Heart right ventricle (tissue), 16 donors: ENCODE measurements at regions of chr4 and their contacts with region 1.

Region 1: DNA sequence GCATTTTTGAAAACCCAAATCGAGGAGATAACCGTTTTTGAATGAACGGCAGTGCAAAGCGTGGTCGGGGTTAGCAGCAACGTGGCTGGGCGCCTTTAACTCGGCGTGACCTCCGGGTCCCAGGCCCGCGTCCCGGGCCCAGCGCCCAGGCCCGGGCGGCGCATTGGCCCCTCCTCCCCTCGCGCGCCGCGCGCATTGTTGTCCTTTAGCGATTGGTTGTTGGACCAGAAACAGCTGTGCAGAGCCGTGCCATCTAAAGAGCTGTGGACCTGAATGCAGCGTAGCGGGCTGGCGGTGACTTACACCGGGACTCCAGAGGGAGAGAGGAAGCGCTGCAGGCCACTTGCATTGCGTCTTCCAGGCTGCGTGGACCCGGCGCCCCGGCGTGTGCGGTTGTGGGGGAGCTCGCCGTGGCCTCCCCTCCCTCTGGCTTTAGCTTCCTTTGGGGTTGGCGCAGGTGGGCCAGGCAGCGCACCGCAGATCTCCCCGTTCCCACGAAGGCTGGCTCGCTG is at the start of gene STOX2:
- DNase-seq: peak; percentile 88
- ATAC-seq: peak; percentile 92 to 97 (median 95)
- H3K4me3 ChIP-seq: peak within 1 kb of the TSS; percentile 51 to 93 (median 76)
- H3K27ac ChIP-seq: peak within 1 kb of the TSS; percentile 77 to 92 (median 89)
- H3K4me1 ChIP-seq: peaks cover 0 to 50% (median 25%) of the 10 kb centered on the region in 9 donors
- H3K27me3 ChIP-seq: peaks cover 0 to 44% (median 0%) of the 10 kb centered on the region in 7 donors
- CTCF ChIP-seq: no peak
- total RNA-seq, gene STOX2: 8.3 to 25.5 (median 13.9) TPM

Region 2: GRCh38 chr4:183430317-183430993 is 474.7 kb before region 1 on chr4:
- intact Hi-C with region 1: no loop called
- DNase-seq: peak in 1 of 2 donors; percentile 10
- ATAC-seq: peak in 6 of 8 donors; percentile 38 to 79 (median 62)
- H3K4me3 ChIP-seq: no peak overlapping the region
- H3K27ac ChIP-seq: peak overlapping the region in 3 of 10 donors; percentile 36 to 67 (median 57)
- H3K4me1 ChIP-seq: peaks cover 0 to 14% (median 5%) of the 10 kb centered on the region in 9 donors
- H3K27me3 ChIP-seq: no peaks in the 10 kb centered on the region
- CTCF ChIP-seq: no peak

Region 3: DNA sequence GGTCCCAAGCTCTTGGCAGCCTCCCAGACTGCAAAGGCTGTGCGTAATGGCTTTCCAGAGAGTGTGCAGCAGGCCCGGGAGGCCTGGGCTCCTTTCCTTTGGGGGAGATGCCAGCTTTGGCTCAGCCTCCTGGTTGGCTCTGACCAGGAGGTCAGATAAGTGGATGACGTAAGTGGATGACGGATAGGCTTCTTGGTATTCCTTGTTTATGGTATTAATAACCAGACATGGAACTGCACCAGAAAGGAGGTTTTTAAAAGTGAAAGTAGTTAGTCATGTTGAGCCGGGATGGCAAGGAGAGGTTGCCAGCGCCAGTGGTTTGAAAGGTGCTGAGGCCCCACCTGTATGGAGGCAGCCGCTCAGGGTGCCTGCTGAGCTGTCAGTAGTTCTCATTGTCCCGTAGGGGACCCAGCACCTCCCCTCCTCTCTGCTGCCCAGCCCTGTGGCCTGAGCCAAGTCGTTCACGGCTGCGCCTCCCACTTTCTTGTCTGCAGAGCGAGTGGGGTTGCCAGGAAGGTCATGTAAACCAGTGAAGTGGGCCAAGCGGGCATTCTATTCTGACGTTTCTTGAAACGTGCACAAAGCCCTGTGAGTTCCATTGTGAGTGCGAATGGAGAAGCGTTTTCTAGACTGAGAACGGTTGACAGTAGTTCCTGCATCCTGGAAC is 28.7 kb before region 1 on chr4:
- intact Hi-C with region 1: loop called in 1 of 10 experiments (anchors 2 kb)
- DNase-seq: peak; percentile 88
- ATAC-seq: peak; percentile 88 to 98 (median 96)
- H3K4me3 ChIP-seq: peak overlapping the region in 9 of 10 donors; percentile 23 to 51 (median 44)
- H3K27ac ChIP-seq: peak overlapping the region; percentile 71 to 88 (median 81)
- H3K4me1 ChIP-seq: peaks cover 0 to 34% (median 22%) of the 10 kb centered on the region in 9 donors
- H3K27me3 ChIP-seq: no peaks in the 10 kb centered on the region
- CTCF ChIP-seq: no peak

Region 4: DNA sequence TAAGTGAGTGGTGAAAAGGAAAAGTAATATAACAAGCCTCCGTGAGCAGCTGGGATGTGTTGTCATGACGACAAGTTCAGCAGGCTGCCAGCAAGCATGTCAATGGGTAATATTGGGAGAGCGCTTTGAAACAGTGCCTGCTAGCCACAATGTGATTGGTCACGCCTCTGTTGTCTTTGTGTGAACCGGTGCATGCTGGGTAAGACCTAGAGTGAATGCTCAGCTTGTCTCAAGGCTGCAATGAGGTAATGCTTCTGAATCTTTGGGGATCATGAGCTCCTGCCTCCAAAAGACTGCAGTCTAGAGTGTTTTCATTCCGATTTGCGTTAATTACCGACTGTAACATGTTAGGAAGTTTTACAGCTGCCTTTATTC is 54.9 kb after region 1 on chr4:
- intact Hi-C with region 1: loop called in 2 of 10 experiments (anchors 5 kb)
- DNase-seq: peak; percentile 21 to 73
- ATAC-seq: peak; percentile 65 to 95 (median 83)
- H3K4me3 ChIP-seq: peak overlapping the region in 8 of 10 donors; percentile 15 to 37 (median 28)
- H3K27ac ChIP-seq: peak overlapping the region in 5 of 10 donors; percentile 22 to 63 (median 48)
- H3K4me1 ChIP-seq: peaks cover 9 to 52% (median 24%) of the 10 kb centered on the region in 9 donors
- H3K27me3 ChIP-seq: no peaks in the 10 kb centered on the region
- CTCF ChIP-seq: no peak

Region 5: GRCh38 chr4:183987987-183988392 is 82.9 kb after region 1 on chr4:
- intact Hi-C with region 1: loop called in 4 of 10 experiments (anchors 5 kb)
- DNase-seq: peak; percentile 44 to 82
- ATAC-seq: peak; percentile 90 to 96 (median 93)
- H3K4me3 ChIP-seq: peak overlapping the region in 9 of 10 donors; percentile 19 to 60 (median 47)
- H3K27ac ChIP-seq: peak overlapping the region; percentile 74 to 93 (median 84)
- H3K4me1 ChIP-seq: peaks cover 0 to 47% (median 31%) of the 10 kb centered on the region in 9 donors
- H3K27me3 ChIP-seq: no peaks in the 10 kb centered on the region
- CTCF ChIP-seq: no peak

Region 6: GRCh38 chr4:184012937-184013336 is 107.8 kb after region 1 on chr4:
- intact Hi-C with region 1: loop called in 1 of 10 experiments (anchors 5 kb)
- DNase-seq: no peak
- ATAC-seq: peak in 4 of 8 donors; percentile 42 to 65 (median 48)
- H3K4me3 ChIP-seq: no peak overlapping the region
- H3K27ac ChIP-seq: peak overlapping the region in 2 of 10 donors; percentile 2 to 10
- H3K4me1 ChIP-seq: peaks cover 0 to 23% (median 20%) of the 10 kb centered on the region in 9 donors
- H3K27me3 ChIP-seq: no peaks in the 10 kb centered on the region
- CTCF ChIP-seq: no peak

Region 7: DNA sequence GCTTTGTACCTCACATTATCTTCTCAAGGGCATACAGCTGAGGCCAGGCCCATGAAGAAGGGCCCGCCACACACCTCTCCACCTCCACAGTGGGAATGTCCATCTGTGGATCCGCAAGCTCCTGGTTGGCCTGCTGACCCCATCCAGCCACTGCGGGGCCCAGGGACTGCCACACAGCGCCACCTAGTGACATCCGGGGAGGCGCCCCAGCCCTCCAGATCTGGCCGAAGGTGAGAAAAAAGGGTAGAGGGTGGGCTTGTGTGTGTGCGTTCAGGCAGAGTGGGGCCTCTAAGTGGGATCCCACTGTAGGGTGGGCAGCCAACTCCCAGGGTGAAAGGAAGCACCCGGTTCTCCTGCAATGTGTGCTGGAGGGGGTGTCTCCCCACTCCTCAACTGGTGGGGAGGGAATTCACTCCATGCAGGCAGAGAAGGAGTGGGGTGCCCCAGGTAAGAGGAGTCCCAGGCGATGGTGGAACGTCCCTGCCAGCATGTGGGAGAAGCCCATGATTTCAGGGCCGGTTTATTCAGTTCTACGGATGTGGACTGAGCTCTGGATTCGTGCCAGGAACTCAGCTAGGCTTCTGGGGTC is 195.3 kb after region 1 on chr4:
- intact Hi-C with region 1: loop called in 1 of 10 experiments (anchors 10 kb)
- DNase-seq: peak; percentile 11 to 73
- ATAC-seq: peak; percentile 40 to 82 (median 67)
- H3K4me3 ChIP-seq: no peak overlapping the region
- H3K27ac ChIP-seq: no peak overlapping the region
- H3K4me1 ChIP-seq: peaks cover 0 to 44% (median 20%) of the 10 kb centered on the region in 9 donors
- H3K27me3 ChIP-seq: no peaks in the 10 kb centered on the region
- CTCF ChIP-seq: peak; percentile 62 to 78 (median 72)